Left colon (tissue), 2 donors: ENCODE measurements at regions of chr3 and their contacts with region 1.

Region 1: GRCh38 chr3:159804726-159805410 is 183.8 kb upstream of the IL12A start:
- DNase-seq: peak; percentile 57 to 68
- ATAC-seq: peak; percentile 99

Region 2: DNA sequence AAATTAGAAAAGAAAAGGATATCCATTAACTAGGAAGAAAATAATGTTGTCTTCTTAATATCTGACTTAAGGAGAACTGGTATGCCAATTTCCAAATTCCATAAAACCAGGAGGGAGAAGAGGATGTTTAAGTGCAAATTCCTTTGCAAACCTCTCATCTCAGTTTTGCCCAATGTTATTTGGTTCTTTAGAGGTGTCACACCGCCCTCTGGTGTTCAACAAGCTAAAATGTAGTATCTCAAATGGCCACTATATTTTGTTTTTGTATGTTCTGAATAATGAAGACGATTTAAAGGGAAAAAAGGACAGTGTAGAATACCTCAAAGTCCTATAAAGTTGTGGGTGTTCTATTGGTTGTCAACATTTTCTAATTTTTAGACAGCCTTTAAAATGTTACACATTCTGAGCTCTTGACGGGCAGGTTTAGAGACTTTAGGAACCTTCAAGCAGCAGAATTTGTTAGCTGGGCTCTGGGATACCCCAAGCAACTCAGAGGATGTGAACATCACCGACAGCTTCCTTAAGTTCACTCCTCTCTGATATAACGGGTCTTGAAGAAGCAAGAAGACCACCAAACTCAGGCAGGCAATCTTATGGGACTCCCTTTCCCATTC is 544.7 kb before region 1 on chr3:
- intact Hi-C with region 1: loop called in 1 of 2 experiments (anchors 10 kb)
- DNase-seq: peak in 1 of 2 donors; percentile 40
- ATAC-seq: peak; percentile 51

Region 3: DNA sequence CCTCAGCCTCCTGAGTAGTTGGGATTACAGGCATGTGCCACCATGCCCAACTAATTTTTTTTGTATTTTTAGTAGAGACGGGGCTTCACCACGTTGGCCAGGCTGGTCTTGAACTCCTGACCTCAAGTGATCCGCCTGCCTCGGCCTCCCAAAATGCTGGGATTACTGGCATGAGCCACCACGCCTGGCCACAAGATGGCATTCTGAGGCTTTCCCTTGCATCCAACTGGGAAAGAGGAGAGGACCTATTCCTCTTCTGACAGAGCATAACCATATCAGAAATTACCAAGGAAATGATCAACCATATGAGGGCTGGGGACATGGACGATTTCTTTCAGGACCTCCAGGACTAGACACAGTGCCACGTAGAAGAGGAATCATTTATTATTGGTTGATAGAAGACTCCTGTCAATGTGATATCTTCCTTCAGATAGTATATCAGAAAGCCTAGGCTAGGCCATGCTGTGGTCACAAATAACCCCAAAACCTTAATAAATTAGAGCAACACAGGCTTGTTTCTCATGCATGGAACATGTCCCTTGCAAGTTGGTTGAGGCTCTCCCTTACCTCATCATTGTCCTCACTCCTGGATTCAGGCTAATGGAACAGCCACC is 188.5 kb before region 1 on chr3:
- intact Hi-C with region 1: loop called in 1 of 2 experiments (anchors 5 kb)
- DNase-seq: peak in 1 of 2 donors; percentile 59
- ATAC-seq: peak; percentile 80

Region 4: GRCh38 chr3:159919873-159920272 is 115.0 kb after region 1 on chr3:
- intact Hi-C with region 1: no loop called
- DNase-seq: no peak
- ATAC-seq: no peak

Region 5: DNA sequence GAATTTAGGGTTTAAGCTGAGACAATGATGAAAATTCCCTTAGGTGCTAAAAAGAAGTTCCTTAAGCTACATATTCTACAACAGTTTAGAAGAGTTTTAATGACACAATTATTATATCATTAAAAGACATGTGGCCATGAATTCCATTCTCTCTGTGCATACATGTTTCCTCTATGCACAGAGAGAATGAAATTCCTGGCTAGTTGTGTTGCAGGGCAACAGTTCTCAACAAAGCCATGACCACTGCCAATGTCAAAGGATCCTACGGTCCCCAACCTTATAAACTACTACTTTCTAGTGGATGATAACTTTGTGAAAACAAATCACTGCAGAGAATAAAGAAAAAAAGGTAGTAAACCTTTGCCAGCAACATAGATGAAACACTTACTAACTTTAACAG is 1814.5 kb after region 1 on chr3:
- intact Hi-C with region 1: no loop called
- DNase-seq: no peak
- ATAC-seq: no peak